CD8-positive, alpha-beta memory T cell (primary cell): ENCODE measurements at regions of chr6 and their contacts with region 1.

Region 1: DNA sequence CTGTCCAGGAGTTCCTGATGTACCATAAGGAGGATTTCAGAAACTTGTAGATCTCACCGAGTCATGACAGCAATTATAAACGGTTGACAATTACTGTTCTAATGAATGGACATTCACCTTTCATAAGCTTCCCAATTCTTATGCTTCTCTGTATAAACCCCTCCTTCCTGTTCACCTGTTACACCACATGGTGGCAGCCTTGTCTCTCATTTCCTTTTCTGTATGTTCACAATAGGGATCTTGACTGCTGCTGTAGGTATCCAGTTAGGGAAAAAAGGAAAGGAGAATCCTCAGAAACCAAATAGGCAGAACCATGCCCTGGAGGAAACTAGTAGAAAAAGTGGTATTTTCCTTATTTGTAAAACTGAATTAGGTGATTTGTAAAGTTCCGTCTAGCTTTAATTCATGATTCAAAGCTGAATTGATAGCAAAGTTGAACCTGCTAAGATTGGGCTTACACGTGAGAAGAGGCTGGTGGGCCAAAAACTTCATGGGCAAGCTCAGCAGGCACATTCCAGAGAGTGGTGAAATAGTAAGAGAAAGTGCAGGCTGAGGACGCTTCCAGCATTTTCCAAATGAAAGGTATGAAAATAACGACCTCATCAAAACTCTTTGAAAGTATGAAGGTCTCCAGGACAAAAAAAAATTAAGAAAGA is 29.0 kb upstream of the TBPL1 start:
- DNase-seq: peak; percentile 13 to 64 (median 49)
- H3K4me3 ChIP-seq: no peak overlapping the region
- H3K4me3 Mint-ChIP-seq: no peak overlapping the region
- H3K27ac ChIP-seq: no peak overlapping the region
- H3K27ac Mint-ChIP-seq: no peak overlapping the region
- H3K4me1 ChIP-seq: no peaks in the 10 kb centered on the region
- H3K4me1 Mint-ChIP-seq: no peaks in the 10 kb centered on the region
- H3K27me3 ChIP-seq: peaks cover 4% of the 10 kb centered on the region
- H3K27me3 Mint-ChIP-seq: peaks cover 6 to 35% of the 10 kb centered on the region in 2 donors

Region 2: GRCh38 chr6:133623065-133623464 is 301.0 kb before region 1 on chr6:
- CTCF ChIA-PET with region 1: no interaction called
- POLR2A ChIA-PET with region 1: no interaction called
- DNase-seq: no peak
- H3K4me3 ChIP-seq: no peak overlapping the region
- H3K4me3 Mint-ChIP-seq: no peak overlapping the region
- H3K27ac ChIP-seq: no peak overlapping the region
- H3K27ac Mint-ChIP-seq: no peak overlapping the region
- H3K4me1 ChIP-seq: no peaks in the 10 kb centered on the region
- H3K4me1 Mint-ChIP-seq: no peaks in the 10 kb centered on the region
- H3K27me3 ChIP-seq: no peaks in the 10 kb centered on the region
- H3K27me3 Mint-ChIP-seq: no peaks in the 10 kb centered on the region

Region 3: DNA sequence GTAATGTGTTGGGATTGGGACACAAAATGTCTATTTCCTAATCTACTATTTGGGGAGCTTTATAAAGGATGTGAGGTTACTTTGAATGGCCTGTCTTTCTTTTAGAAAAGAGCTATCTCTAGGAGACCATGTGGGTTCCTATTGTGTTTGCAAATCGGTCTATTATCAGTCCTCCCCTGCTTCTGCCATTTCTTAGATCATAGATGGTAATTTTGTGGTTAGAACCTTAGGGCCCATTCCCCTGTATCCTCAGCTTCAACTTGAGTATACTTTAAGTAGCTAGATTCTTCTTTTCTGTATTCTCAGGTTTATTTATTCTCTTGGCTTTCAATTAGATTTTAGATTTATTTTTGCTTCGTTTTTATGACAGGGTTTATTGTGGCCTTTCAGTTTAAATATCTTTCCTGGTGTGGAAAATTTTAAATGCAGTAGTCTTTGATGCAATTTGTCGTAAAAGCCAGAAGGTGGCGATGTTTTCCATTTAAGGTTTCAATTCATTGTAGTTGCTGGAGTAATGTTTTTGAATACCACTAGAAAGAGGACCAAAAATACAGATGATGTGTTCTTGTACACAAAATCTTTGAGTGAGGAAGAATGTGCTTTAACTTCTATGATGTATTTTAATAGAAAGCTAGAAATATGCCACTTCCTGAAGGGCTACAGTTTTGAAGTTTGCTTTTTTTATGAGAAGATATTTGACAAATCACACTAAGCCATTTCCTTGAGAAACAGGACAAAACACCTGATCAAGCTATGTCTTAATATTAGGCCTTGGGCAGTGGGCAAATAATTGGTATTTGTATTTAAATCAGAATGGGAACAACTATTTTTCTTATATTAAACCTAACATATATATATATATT is 49.3 kb after region 1 on chr6:
- CTCF ChIA-PET with region 1: interaction called, 11 read pairs
- POLR2A ChIA-PET with region 1: no interaction called
- DNase-seq: peak in 2 of 5 donors; percentile 26 to 39
- H3K4me3 ChIP-seq: no peak overlapping the region
- H3K4me3 Mint-ChIP-seq: no peak overlapping the region
- H3K27ac ChIP-seq: no peak overlapping the region
- H3K27ac Mint-ChIP-seq: peak overlapping the region in 5 of 8 donors; percentile 9 to 73 (median 12)
- H3K4me1 ChIP-seq: peaks cover 20% of the 10 kb centered on the region
- H3K4me1 Mint-ChIP-seq: peaks cover 49 to 82% (median 69%) of the 10 kb centered on the region in 3 donors
- H3K27me3 ChIP-seq: no peaks in the 10 kb centered on the region
- H3K27me3 Mint-ChIP-seq: no peaks in the 10 kb centered on the region

Region 4: GRCh38 chr6:134097114-134097707 is 173.1 kb after region 1 on chr6:
- CTCF ChIA-PET with region 1: interaction called, 80 read pairs
- POLR2A ChIA-PET with region 1: interaction called, 6 read pairs
- DNase-seq: peak; percentile 37 to 69 (median 52)
- H3K4me3 ChIP-seq: no peak overlapping the region
- H3K4me3 Mint-ChIP-seq: no peak overlapping the region
- H3K27ac ChIP-seq: no peak overlapping the region
- H3K27ac Mint-ChIP-seq: no peak overlapping the region
- H3K4me1 ChIP-seq: no peaks in the 10 kb centered on the region
- H3K4me1 Mint-ChIP-seq: no peaks in the 10 kb centered on the region
- H3K27me3 ChIP-seq: peaks cover 3% of the 10 kb centered on the region
- H3K27me3 Mint-ChIP-seq: peaks cover 3 to 15% of the 10 kb centered on the region in 2 donors